Transverse colon (tissue), 4 donors: ENCODE measurements at regions of chr20 and their contacts with region 1.

Region 1: GRCh38 chr20:32357869-32358631 is at the start of gene ASXL1:
- DNase-seq: peak; percentile 97
- H3K4me3 ChIP-seq: peak within 1 kb of the TSS; percentile 81 to 99 (median 96)
- H3K27ac ChIP-seq: peak within 1 kb of the TSS; percentile 94 to 98 (median 98)
- H3K4me1 ChIP-seq: peaks cover 4 to 46% (median 34%) of the 10 kb centered on the region in 4 donors
- H3K27me3 ChIP-seq: no peaks in the 10 kb centered on the region
- CTCF ChIP-seq: peak in 1 of 5 experiments; percentile 22
- EP300 ChIP-seq: no peak
- POLR2A ChIP-seq: peak; percentile 59
- total RNA-seq, gene ASXL1: 39.6 to 293 (median 92.8) TPM

Region 2: GRCh38 chr20:32252189-32252588 is 105.9 kb before region 1 on chr20:
- in situ Hi-C with region 1: loop called in 1 of 4 experiments (anchors 25 kb)
- intact Hi-C with region 1: no loop called
- DNase-seq: no peak
- H3K4me3 ChIP-seq: no peak overlapping the region
- H3K27ac ChIP-seq: no peak overlapping the region
- H3K4me1 ChIP-seq: peaks cover 0 to 13% (median 9%) of the 10 kb centered on the region in 4 donors
- H3K27me3 ChIP-seq: no peaks in the 10 kb centered on the region
- CTCF ChIP-seq: no peak
- EP300 ChIP-seq: no peak
- POLR2A ChIP-seq: no peak

Region 3: DNA sequence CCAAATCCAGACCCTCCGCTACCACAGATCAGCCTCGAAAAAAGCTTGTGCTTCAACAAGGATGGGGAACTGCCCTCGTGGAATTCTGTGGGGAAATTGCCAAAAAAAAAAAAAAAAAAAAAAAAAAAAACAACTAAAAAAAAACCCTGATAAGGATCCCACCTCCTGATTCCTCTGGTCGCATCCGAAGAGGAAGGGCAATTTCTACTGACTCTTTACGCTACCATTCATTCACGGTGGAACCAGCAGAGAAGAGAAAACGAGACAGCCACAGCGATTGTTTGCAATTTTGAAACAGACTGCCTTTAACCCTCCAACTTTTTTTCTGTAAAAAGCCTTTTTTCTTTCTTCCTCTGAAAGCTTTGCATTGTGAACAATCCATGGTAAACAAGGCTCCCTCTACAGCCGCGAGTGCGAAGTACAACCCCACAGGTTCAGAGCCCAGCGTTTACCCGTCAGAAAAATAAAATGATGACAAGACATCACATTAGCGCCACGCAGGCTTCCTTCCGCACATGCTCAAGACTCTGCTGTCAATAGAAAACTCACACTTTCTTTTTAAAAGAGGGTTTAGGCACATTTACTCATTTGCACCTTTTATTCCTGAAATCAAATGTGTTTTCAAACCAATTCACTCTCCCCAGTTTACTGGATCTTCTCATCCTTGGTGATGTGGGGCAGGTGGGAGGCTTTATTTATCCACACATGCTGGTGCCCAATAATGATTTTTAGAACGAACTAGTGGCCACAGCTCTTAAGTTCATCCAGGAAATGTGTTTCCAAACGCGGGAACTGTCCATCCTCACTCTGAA is 127.1 kb after region 1 on chr20:
- in situ Hi-C with region 1: no loop called
- intact Hi-C with region 1: loop called (anchors 5 kb)
- DNase-seq: peak; percentile 87
- H3K4me3 ChIP-seq: peak overlapping the region in 3 of 4 donors; percentile 89 to 97 (median 93)
- H3K27ac ChIP-seq: peak overlapping the region; percentile 93 to 97 (median 96)
- H3K4me1 ChIP-seq: peaks cover 17 to 36% (median 28%) of the 10 kb centered on the region in 4 donors
- H3K27me3 ChIP-seq: no peaks in the 10 kb centered on the region
- CTCF ChIP-seq: peak; percentile 75 to 94 (median 87)
- EP300 ChIP-seq: no peak
- POLR2A ChIP-seq: no peak